ENCODE measurements at regions of chr6 and their contacts with region 1.

Region 1: DNA sequence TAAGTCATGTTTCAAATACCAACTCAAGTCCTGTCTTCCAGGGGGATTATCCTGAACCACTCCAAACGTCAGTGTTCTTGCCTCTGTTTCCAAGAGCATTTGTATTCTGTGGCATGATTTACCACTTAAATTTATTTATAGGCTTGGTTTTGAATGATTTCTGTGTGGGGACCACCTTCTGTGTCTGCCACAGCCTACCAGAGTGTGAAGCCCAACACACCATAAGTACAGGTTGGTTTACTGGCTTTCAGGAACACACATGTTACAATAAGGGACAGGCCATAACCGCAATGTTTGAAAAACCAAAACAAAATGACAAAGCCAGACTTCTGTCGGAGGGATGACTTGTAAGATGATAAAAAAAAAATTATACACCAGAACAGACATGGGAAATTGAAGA is 56.5 kb upstream of the MAP3K7 start:
- DNase-seq: no peak
- ATAC-seq: no peak
- H3K4me3 ChIP-seq: no peak overlapping the region
- H3K27ac ChIP-seq: no peak overlapping the region
- H3K4me1 ChIP-seq: no peaks in the 10 kb centered on the region
- H3K27me3 ChIP-seq: no peaks in the 10 kb centered on the region
- CTCF ChIP-seq: no peak
- EP300 ChIP-seq: no peak
- POLR2A ChIP-seq: no peak
- RAD21 ChIP-seq: no peak

Region 2: DNA sequence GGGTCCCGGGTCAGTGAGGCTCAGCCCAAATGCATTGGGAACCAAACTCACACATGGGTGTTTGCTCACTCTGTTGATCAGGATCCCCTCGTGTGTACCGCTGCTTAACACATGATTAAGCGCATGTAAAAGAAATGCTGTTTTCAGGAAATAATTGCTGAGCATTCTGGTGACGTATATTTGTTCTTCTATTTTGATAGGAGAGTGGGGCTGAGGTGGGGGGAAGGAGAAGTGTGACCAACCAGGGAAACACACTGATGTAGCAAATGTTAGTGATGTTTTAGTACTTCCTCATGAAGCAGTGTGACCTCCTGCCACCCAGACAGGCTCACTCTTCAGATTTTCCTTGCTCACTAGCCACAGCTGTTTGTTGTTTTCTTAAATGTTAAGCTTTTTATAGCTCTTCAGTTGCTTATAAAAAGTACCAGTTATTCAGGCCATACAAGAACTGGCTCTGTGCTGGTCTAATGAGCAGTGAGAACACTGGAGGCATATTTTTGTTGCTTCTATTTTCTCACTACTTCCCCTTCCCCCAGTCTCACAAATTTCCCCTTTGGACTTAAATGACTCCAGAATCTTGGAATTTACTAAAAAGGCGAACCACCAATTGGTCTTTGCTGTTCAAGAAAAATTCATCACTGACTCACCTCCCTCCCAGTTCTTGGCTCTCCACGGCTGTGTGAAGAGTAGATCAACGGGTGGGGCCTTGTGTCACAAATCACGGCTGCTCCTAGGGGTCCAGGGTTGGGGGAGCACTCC is 267.5 kb before region 1 on chr6:
- CTCF ChIA-PET with region 1: no interaction called
- POLR2A ChIA-PET with region 1: no interaction called
- in situ Hi-C with region 1: no loop called
- intact Hi-C with region 1: loop called (anchors 10 kb)
- DNase-seq: no peak
- ATAC-seq: no peak
- H3K4me3 ChIP-seq: no peak overlapping the region
- H3K27ac ChIP-seq: no peak overlapping the region
- H3K4me1 ChIP-seq: no peaks in the 10 kb centered on the region
- H3K27me3 ChIP-seq: peaks cover 0 to 2% of the 10 kb centered on the region in 2 experiments; a peak in 1 of 5 replicates
- CTCF ChIP-seq: no peak
- EP300 ChIP-seq: no peak
- POLR2A ChIP-seq: no peak
- RAD21 ChIP-seq: no peak

Region 3: DNA sequence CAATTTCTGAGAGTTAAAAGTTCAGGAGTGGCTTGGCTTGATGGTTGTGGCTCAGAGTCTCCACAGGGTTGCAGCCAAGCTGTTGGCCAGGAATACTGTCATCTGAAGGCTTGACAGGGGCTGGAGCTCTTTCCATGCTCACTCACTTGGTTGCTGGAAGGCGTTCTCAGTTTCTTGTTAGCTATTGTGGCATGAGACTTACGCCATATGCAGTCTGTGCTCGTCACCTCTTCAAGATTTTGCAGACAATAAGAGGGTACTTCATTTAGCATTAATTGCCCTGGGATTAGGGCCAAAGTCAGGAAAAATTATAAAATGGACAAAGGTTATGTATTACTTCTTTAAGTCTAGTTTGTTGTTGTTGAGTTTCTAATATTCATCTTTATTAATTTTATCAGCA is 324.1 kb after region 1 on chr6:
- CTCF ChIA-PET with region 1: no interaction called
- POLR2A ChIA-PET with region 1: no interaction called
- in situ Hi-C with region 1: no loop called
- intact Hi-C with region 1: no loop called
- DNase-seq: no peak
- ATAC-seq: no peak
- H3K4me3 ChIP-seq: no peak overlapping the region
- H3K27ac ChIP-seq: no peak overlapping the region
- H3K4me1 ChIP-seq: no peaks in the 10 kb centered on the region
- H3K27me3 ChIP-seq: no peaks in the 10 kb centered on the region
- CTCF ChIP-seq: no peak
- EP300 ChIP-seq: no peak
- POLR2A ChIP-seq: no peak
- RAD21 ChIP-seq: no peak

Region 4: GRCh38 chr6:90978046-90978445 is 334.7 kb after region 1 on chr6:
- CTCF ChIA-PET with region 1: no interaction called
- POLR2A ChIA-PET with region 1: no interaction called
- in situ Hi-C with region 1: no loop called
- intact Hi-C with region 1: no loop called
- DNase-seq: no peak
- ATAC-seq: no peak
- H3K4me3 ChIP-seq: no peak overlapping the region
- H3K27ac ChIP-seq: no peak overlapping the region
- H3K4me1 ChIP-seq: no peaks in the 10 kb centered on the region
- H3K27me3 ChIP-seq: no peaks in the 10 kb centered on the region
- CTCF ChIP-seq: no peak
- EP300 ChIP-seq: no peak
- POLR2A ChIP-seq: no peak
- RAD21 ChIP-seq: no peak